ENCODE measurements at regions of chr2 and their contacts with region 1.

Region 1: GRCh38 chr2:206442833-206443734 is at the start of gene ADAM23:
- DNase-seq: peak; percentile 86 to 99 (median 92)

Region 2: DNA sequence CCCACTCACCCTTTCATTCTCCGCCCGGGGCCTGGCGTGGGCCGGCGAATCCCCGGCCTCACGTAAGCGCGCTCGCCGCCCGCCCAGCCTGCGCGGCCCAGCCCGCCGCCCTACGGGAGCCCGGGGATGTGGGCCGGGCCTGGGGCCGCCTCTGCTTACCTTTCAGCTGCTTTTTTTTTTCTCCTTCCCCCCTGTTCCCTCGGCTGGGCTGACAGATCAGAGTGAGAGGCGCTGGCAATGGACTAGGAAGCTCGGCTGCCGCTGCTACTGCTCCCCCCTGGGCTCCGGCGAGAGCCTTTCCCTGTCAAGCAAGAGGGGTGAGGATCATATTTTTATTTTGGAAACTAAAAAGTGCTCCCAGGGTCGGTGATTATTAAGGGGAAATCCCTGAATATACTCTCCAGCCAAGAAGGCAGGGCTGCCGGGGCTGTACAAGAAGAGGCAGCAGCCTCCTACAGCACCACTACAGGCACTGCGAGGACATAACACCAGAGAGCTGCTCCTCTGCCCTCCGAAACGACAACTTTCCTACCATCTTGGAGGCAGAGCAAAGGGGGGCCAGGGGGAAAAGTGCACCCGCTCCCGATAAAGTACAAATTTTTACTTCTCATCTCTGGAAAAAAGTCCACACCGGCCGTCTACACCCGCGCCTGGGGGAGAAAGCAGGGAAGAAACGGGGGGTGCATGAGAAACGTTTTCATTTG is 357.2 kb before region 1 on chr2 and contains the start of gene INO80D:
- intact Hi-C with region 1: loop called (anchors 10 kb)
- DNase-seq: peak; percentile 57 to 95 (median 71)

Region 3: GRCh38 chr2:206241736-206242135 is 201.3 kb before region 1 on chr2:
- intact Hi-C with region 1: no loop called
- DNase-seq: no peak

Region 4: GRCh38 chr2:206585335-206585734 is 142.3 kb after region 1 on chr2:
- intact Hi-C with region 1: no loop called
- DNase-seq: no peak

Region 5: GRCh38 chr2:206840999-206841398 is 397.9 kb after region 1 on chr2:
- intact Hi-C with region 1: no loop called
- DNase-seq: no peak